Right cardiac atrium (tissue), 5 donors: ENCODE measurements at regions of chr13 and their contacts with region 1.

Region 1: GRCh38 chr13:51066091-51066831 is 44.8 kb downstream of the C13orf42 start:
- DNase-seq: peak in 1 of 3 donors; percentile 55
- ATAC-seq: peak in 1 of 2 donors; percentile 58
- H3K4me3 ChIP-seq: no peak overlapping the region
- H3K27ac ChIP-seq: peak overlapping the region; percentile 9
- H3K4me1 ChIP-seq: peaks cover 4% of the 10 kb centered on the region
- H3K27me3 ChIP-seq: no peaks in the 10 kb centered on the region

Region 2: DNA sequence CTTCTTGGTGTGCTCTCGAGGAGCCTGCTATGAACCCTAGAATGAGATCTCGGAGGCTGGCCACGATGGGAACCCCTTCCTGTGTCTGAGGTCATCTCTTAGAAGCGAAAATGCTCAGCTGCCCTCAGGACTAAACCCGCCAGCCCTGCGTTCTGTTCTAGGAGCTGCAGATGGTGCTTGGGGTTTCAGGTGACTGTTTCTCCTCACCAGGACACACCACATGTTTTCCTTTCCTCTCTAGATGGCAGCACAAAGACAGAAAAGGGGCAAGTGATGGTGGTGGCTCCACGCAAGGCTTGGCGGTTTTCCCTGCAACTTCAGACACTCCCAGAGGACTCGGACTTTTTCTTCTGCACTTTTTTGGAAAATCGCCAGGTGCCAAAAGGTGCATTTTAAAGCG is 96.6 kb before region 1 on chr13:
- intact Hi-C with region 1: loop called in 1 of 4 experiments (anchors 10 kb)
- DNase-seq: no peak
- ATAC-seq: no peak
- H3K4me3 ChIP-seq: no peak overlapping the region
- H3K27ac ChIP-seq: no peak overlapping the region
- H3K4me1 ChIP-seq: no peaks in the 10 kb centered on the region
- H3K27me3 ChIP-seq: no peaks in the 10 kb centered on the region

Region 3: GRCh38 chr13:51000571-51001260 is 65.5 kb before region 1 on chr13:
- intact Hi-C with region 1: no loop called
- DNase-seq: peak; percentile 66 to 82 (median 72)
- ATAC-seq: peak; percentile 56 to 71
- H3K4me3 ChIP-seq: no peak overlapping the region
- H3K27ac ChIP-seq: no peak overlapping the region
- H3K4me1 ChIP-seq: no peaks in the 10 kb centered on the region
- H3K27me3 ChIP-seq: no peaks in the 10 kb centered on the region

Region 4: GRCh38 chr13:51125498-51126226 is 59.4 kb after region 1 on chr13:
- intact Hi-C with region 1: no loop called
- DNase-seq: peak in 2 of 3 donors; percentile 28 to 67
- ATAC-seq: peak; percentile 75
- H3K4me3 ChIP-seq: no peak overlapping the region
- H3K27ac ChIP-seq: no peak overlapping the region
- H3K4me1 ChIP-seq: no peaks in the 10 kb centered on the region
- H3K27me3 ChIP-seq: no peaks in the 10 kb centered on the region